Natural killer cell (primary cell): ENCODE measurements at regions of chr9 and their contacts with region 1.

Region 1: GRCh38 chr9:114339130-114339908 is 9.7 kb downstream of the ORM2 start:
- DNase-seq: peak; percentile 63 to 78
- ATAC-seq: peak; percentile 77 to 83 (median 79)
- H3K4me3 ChIP-seq: no peak overlapping the region
- H3K4me3 Mint-ChIP-seq: no peak overlapping the region
- H3K27ac ChIP-seq: peak overlapping the region; percentile 39
- H3K27ac Mint-ChIP-seq: peak overlapping the region; percentile 78 to 84
- H3K4me1 ChIP-seq: peaks cover 17% of the 10 kb centered on the region
- H3K4me1 Mint-ChIP-seq: peaks cover 32 to 50% of the 10 kb centered on the region in 2 donors
- H3K27me3 ChIP-seq: no peaks in the 10 kb centered on the region
- H3K27me3 Mint-ChIP-seq: no peaks in the 10 kb centered on the region
- CTCF ChIP-seq: peak; percentile 80

Region 2: GRCh38 chr9:114405294-114406034 is 66.1 kb after region 1 on chr9:
- intact Hi-C with region 1: loop called (anchors 2 kb)
- DNase-seq: peak; percentile 71 to 93
- ATAC-seq: peak; percentile 92 to 99 (median 99)
- H3K4me3 ChIP-seq: no peak overlapping the region
- H3K4me3 Mint-ChIP-seq: no peak overlapping the region
- H3K27ac ChIP-seq: no peak overlapping the region
- H3K27ac Mint-ChIP-seq: peak overlapping the region; percentile 23 to 25
- H3K4me1 ChIP-seq: peaks cover 7% of the 10 kb centered on the region
- H3K4me1 Mint-ChIP-seq: peaks cover 6 to 15% of the 10 kb centered on the region in 2 donors
- H3K27me3 ChIP-seq: no peaks in the 10 kb centered on the region
- H3K27me3 Mint-ChIP-seq: no peaks in the 10 kb centered on the region
- CTCF ChIP-seq: peak; percentile 78

Region 3: GRCh38 chr9:114505187-114506081 is 166.1 kb after region 1 on chr9 and contains the start of gene WHRN:
- intact Hi-C with region 1: loop called (anchors 5 kb)
- DNase-seq: peak; percentile 86 to 96
- ATAC-seq: peak; percentile 82 to 94 (median 89)
- H3K4me3 ChIP-seq: peak within 1 kb of the TSS; percentile 53
- H3K4me3 Mint-ChIP-seq: peak within 1 kb of the TSS; percentile 91
- H3K27ac ChIP-seq: peak within 1 kb of the TSS; percentile 29
- H3K27ac Mint-ChIP-seq: peak within 1 kb of the TSS; percentile 83 to 91
- H3K4me1 ChIP-seq: peaks cover 33% of the 10 kb centered on the region
- H3K4me1 Mint-ChIP-seq: peaks cover 25 to 28% of the 10 kb centered on the region in 2 donors
- H3K27me3 ChIP-seq: peaks cover 25% of the 10 kb centered on the region
- H3K27me3 Mint-ChIP-seq: peaks cover 37 to 44% of the 10 kb centered on the region in 2 donors
- CTCF ChIP-seq: no peak
- total RNA-seq, gene WHRN: 29.8 to 90.6 (median 36.8) TPM

Region 4: GRCh38 chr9:114653556-114654159 is 314.3 kb after region 1 on chr9:
- intact Hi-C with region 1: loop called (anchors 1 kb)
- DNase-seq: peak; percentile 70 to 90
- ATAC-seq: peak; percentile 89 to 99 (median 97)
- H3K4me3 ChIP-seq: no peak overlapping the region
- H3K4me3 Mint-ChIP-seq: no peak overlapping the region
- H3K27ac ChIP-seq: no peak overlapping the region
- H3K27ac Mint-ChIP-seq: no peak overlapping the region
- H3K4me1 ChIP-seq: peaks cover 4% of the 10 kb centered on the region
- H3K4me1 Mint-ChIP-seq: peaks cover 6 to 18% of the 10 kb centered on the region in 2 donors
- H3K27me3 ChIP-seq: no peaks in the 10 kb centered on the region
- H3K27me3 Mint-ChIP-seq: peaks cover 0 to 3% of the 10 kb centered on the region in 2 donors
- CTCF ChIP-seq: peak; percentile 81

Region 5: GRCh38 chr9:114738581-114739316 is 399.4 kb after region 1 on chr9:
- intact Hi-C with region 1: no loop called
- DNase-seq: peak; percentile 55 to 90
- ATAC-seq: peak; percentile 87 to 92 (median 88)
- H3K4me3 ChIP-seq: no peak overlapping the region
- H3K4me3 Mint-ChIP-seq: no peak overlapping the region
- H3K27ac ChIP-seq: no peak overlapping the region
- H3K27ac Mint-ChIP-seq: no peak overlapping the region
- H3K4me1 ChIP-seq: peaks cover 18% of the 10 kb centered on the region
- H3K4me1 Mint-ChIP-seq: peaks cover 9 to 16% of the 10 kb centered on the region in 2 donors
- H3K27me3 ChIP-seq: no peaks in the 10 kb centered on the region
- H3K27me3 Mint-ChIP-seq: no peaks in the 10 kb centered on the region
- CTCF ChIP-seq: peak; percentile 82